Panc1 (cell line): ENCODE measurements at regions of chr2 and their contacts with region 1.

Region 1: GRCh38 chr2:186526281-186526680 is 40.2 kb downstream of the ZC3H15 start:
- DNase-seq: no peak
- ATAC-seq: no peak
- H3K4me3 ChIP-seq: no peak overlapping the region
- H3K27ac ChIP-seq: no peak overlapping the region
- H3K4me1 ChIP-seq: no peaks in the 10 kb centered on the region
- H3K27me3 ChIP-seq: no peaks in the 10 kb centered on the region
- CTCF ChIP-seq: no peak

Region 2: DNA sequence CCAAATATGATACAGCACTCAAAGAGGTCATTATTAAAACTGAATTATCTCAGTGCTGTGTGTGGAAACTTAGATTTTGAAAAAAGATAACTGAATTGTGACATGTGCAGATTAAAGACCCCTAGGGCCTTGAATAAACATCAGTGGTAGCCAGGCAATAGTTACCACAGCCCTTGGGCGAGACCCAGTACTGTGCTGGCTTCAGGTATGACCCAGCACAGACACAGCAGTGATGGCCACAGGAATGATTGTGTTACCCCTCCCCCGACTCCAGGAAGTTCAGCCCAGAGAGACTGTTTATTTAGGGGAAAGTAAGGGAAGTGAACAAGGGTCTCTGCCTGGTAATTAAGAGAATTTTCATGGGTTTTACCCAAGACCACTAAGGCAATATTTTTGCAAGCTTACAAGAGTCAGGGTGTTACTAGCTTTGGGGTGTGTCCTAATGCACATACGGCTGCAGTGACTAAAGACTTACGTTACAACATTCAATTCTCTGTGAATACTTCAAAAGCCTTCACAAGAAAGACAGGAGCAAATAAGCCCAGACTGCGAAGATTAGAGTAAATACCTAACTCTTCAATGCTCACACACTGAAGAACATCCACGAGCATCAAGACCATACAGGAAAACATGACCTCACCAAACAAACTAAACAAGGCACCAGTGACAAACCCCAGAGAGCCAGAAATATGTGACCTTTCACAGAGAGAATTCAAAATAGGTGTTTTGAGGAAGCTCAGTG is 35.4 kb after region 1 on chr2:
- CTCF ChIA-PET with region 1: no interaction called
- POLR2A ChIA-PET with region 1: interaction called, 14 read pairs
- in situ Hi-C with region 1: no loop called
- intact Hi-C with region 1: no loop called
- DNase-seq: no peak
- ATAC-seq: no peak
- H3K4me3 ChIP-seq: no peak overlapping the region
- H3K27ac ChIP-seq: no peak overlapping the region
- H3K4me1 ChIP-seq: no peaks in the 10 kb centered on the region
- H3K27me3 ChIP-seq: no peaks in the 10 kb centered on the region
- CTCF ChIP-seq: no peak

Region 3: DNA sequence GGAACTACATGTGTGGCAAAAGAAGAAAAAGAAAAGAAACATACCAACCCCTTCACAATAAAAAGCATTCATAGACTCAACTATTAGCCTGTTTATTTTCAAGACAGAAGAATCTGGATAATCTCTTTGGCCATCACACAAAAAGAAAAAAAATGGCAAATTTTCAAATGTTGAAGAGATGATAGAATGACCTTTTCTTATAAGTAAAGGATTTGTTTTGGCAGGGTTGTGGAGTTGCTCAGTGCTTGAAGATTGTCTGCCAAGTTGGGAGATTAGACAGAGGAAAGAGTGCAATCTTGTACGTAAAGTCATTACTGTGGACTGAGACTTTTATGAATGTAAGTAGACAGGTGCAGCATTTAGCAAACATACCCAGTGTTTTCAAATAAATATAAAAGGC is 149.1 kb after region 1 on chr2:
- CTCF ChIA-PET with region 1: no interaction called
- POLR2A ChIA-PET with region 1: interaction called, 18 read pairs
- in situ Hi-C with region 1: no loop called
- intact Hi-C with region 1: no loop called
- DNase-seq: no peak
- ATAC-seq: no peak
- H3K4me3 ChIP-seq: no peak overlapping the region
- H3K27ac ChIP-seq: no peak overlapping the region
- H3K4me1 ChIP-seq: no peaks in the 10 kb centered on the region
- H3K27me3 ChIP-seq: no peaks in the 10 kb centered on the region
- CTCF ChIP-seq: no peak